ENCODE measurements at regions of chr11 and their contacts with region 1.

Region 1: GRCh38 chr11:32751381-32751780 is 43.1 kb downstream of the CCDC73 start:
- DNase-seq: no peak
- H3K4me3 ChIP-seq: no peak overlapping the region
- H3K27ac ChIP-seq: no peak overlapping the region
- H3K4me1 ChIP-seq: no peaks in the 10 kb centered on the region
- H3K27me3 ChIP-seq: peaks cover 4% of the 10 kb centered on the region
- CTCF ChIP-seq: no peak

Region 2: GRCh38 chr11:32829680-32830412 is 78.5 kb after region 1 on chr11 and contains the start of gene PRRG4:
- CTCF ChIA-PET with region 1: no interaction called
- dilution Hi-C with region 1: no loop called
- in situ Hi-C with region 1: no loop called
- intact Hi-C with region 1: no loop called
- DNase-seq: peak; percentile 90
- H3K4me3 ChIP-seq: peak within 1 kb of the TSS; percentile 56 to 93 (median 89)
- H3K27ac ChIP-seq: peak within 1 kb of the TSS; percentile 81
- H3K4me1 ChIP-seq: peaks cover 10% of the 10 kb centered on the region
- H3K27me3 ChIP-seq: no peaks in the 10 kb centered on the region
- CTCF ChIP-seq: no peak
- total RNA-seq, gene PRRG4: 10.3 to 15.2 TPM

Region 3: DNA sequence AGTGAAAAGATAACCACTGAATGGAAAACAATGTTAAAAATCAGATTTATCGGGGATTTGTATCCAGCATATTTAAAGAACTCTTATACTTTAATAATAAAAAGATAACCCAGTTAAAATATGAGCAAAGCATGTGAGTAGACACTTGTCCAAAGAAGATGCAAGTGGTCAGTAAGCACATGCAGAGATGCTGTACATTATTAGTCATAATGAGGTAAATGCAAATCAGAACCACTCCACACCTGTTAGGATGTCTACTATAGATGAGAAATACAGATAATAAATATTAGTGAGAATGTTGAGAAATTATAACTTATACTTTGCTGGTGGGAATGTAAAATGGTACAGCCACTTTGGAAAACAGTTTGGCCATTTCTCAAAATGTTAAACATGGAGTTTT is 169.2 kb after region 1 on chr11:
- CTCF ChIA-PET with region 1: interaction called, 10 read pairs
- dilution Hi-C with region 1: no loop called
- in situ Hi-C with region 1: no loop called
- intact Hi-C with region 1: no loop called
- DNase-seq: peak; percentile 4
- H3K4me3 ChIP-seq: no peak overlapping the region
- H3K27ac ChIP-seq: no peak overlapping the region
- H3K4me1 ChIP-seq: no peaks in the 10 kb centered on the region
- H3K27me3 ChIP-seq: no peaks in the 10 kb centered on the region
- CTCF ChIP-seq: no peak

Measured in mammary epithelial cell (primary cell).